Body of pancreas (tissue), 4 donors: ENCODE measurements at regions of chr18 and their contacts with region 1.

Region 1: GRCh38 chr18:68660354-68661183 is 54.3 kb downstream of the TMX3 start:
- DNase-seq: no peak
- ATAC-seq: peak; percentile 12
- H3K4me3 ChIP-seq: no peak overlapping the region
- H3K27ac ChIP-seq: no peak overlapping the region
- H3K4me1 ChIP-seq: no peaks in the 10 kb centered on the region
- H3K27me3 ChIP-seq: no peaks in the 10 kb centered on the region
- CTCF ChIP-seq: peak; percentile 29 to 60 (median 51)
- POLR2A ChIP-seq: no peak

Region 2: GRCh38 chr18:67219821-67220220 is 1440.7 kb before region 1 on chr18:
- intact Hi-C with region 1: loop called (anchors 5 kb)
- DNase-seq: no peak
- ATAC-seq: no peak
- H3K4me3 ChIP-seq: no peak overlapping the region
- H3K27ac ChIP-seq: no peak overlapping the region
- H3K4me1 ChIP-seq: no peaks in the 10 kb centered on the region
- H3K27me3 ChIP-seq: peaks cover 0 to 5% of the 10 kb centered on the region in 2 donors
- CTCF ChIP-seq: no peak
- POLR2A ChIP-seq: no peak